ENCODE measurements at regions of chr17 and their contacts with region 1.

Region 1: DNA sequence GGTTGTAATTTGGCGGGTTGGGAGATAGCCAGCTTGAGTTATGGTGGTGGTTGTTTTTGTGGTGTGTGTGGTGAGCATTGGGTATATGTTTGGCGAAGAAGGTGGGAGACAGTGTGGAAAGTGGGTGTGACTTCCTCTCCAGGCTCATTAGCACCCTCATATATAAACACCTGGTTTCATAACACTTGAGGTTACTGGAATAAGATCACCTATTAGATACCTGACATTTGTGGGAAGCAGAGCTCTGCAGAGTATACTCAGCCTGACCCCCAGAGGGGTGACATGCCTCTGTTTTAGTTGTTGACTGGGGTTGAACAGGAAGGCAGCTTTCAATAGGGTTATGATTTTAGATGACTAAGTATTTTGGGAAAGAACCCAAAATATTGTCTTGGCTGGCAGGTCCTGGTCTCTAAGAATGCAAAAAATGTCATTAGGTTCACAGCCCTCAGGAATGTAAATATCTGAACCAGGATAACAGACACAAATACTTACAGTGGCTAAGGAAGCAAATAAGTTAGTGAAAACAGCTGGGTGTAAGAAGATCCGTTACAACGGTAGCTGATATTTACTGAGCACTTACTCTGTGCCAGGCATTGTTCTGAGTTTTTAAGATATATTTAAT is 18.3 kb upstream of the EFCAB13 start:
- DNase-seq: no peak
- H3K4me3 ChIP-seq: no peak overlapping the region
- H3K27ac ChIP-seq: no peak overlapping the region
- H3K4me1 ChIP-seq: peaks cover 0 to 16% (median 6%) of the 10 kb centered on the region in 6 donors
- H3K27me3 ChIP-seq: no peaks in the 10 kb centered on the region
- CTCF ChIP-seq: no peak
- POLR2A ChIP-seq: no peak

Region 2: GRCh38 chr17:47117386-47117785 is 188.0 kb before region 1 on chr17:
- intact Hi-C with region 1: loop called (anchors 5 kb)
- DNase-seq: no peak
- H3K4me3 ChIP-seq: no peak overlapping the region
- H3K27ac ChIP-seq: no peak overlapping the region
- H3K4me1 ChIP-seq: no peaks in the 10 kb centered on the region
- H3K27me3 ChIP-seq: no peaks in the 10 kb centered on the region
- CTCF ChIP-seq: no peak
- POLR2A ChIP-seq: no peak

Region 3: GRCh38 chr17:47404006-47404405 is 98.6 kb after region 1 on chr17:
- intact Hi-C with region 1: no loop called
- DNase-seq: no peak
- H3K4me3 ChIP-seq: no peak overlapping the region
- H3K27ac ChIP-seq: no peak overlapping the region
- H3K4me1 ChIP-seq: peaks cover 0 to 3% (median 0%) of the 10 kb centered on the region in 6 donors
- H3K27me3 ChIP-seq: no peaks in the 10 kb centered on the region
- CTCF ChIP-seq: no peak
- POLR2A ChIP-seq: no peak